Activated naive CD8-positive, alpha-beta T cell treated with anti-CD3 and anti-CD28 coated beads, Interleukin-2, amount 10 ng/mL, durations not matched to agents 7 days and 5 days (primary cell): ENCODE measurements at regions of chr2 and their contacts with region 1.

Region 1: GRCh38 chr2:85595301-85596025 is at the start of gene RNF181:
- DNase-seq: peak; percentile 83
- ATAC-seq: peak; percentile 100
- H3K4me3 Mint-ChIP-seq: peak within 1 kb of the TSS; percentile 95
- H3K27ac Mint-ChIP-seq: peak within 1 kb of the TSS; percentile 93
- H3K4me1 Mint-ChIP-seq: peaks cover 27% of the 10 kb centered on the region
- H3K27me3 Mint-ChIP-seq: no peaks in the 10 kb centered on the region
- total RNA-seq, gene RNF181: 96.4 to 97.4 TPM

Region 2: DNA sequence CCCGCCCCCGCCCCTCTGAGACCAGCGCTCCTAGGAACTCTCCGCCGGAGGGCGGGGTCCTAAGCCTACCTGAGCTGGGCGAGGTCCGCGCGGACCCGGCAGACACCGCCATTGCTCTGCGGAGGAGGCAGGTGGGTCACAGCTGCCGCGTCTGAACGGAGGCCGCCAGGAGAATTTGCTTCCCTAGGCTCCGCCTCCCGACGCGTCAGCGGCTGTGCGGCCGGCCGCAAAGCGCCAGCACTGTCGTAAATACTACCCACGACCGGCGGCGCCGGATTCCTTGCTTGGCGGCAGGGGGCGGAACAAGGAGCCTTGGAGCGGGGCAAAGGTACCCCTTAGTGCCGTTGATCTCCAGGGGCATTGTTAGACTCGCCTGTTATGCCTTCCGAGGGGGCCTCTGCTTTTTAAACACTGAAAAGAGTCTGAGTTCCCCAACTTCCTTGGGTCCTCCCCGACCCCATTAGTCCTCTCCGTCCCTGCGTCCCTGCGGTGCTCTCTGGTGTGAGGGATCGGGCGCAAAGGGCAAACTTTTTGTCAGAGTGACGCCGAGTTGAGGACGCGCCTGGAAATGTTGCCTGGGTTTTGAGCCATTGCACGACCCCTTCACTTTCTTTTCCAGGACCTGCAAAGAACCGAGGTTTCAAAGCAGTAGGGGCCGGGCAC is 34.0 kb before region 1 on chr2 and contains the start of gene GGCX:
- POLR2A ChIA-PET with region 1: interaction called, 22 read pairs
- DNase-seq: peak; percentile 89
- ATAC-seq: peak; percentile 95
- H3K4me3 Mint-ChIP-seq: peak within 1 kb of the TSS; percentile 97
- H3K27ac Mint-ChIP-seq: peak within 1 kb of the TSS; percentile 95
- H3K4me1 Mint-ChIP-seq: peaks cover 24% of the 10 kb centered on the region
- H3K27me3 Mint-ChIP-seq: no peaks in the 10 kb centered on the region
- total RNA-seq, gene GGCX: 24.8 to 26.8 TPM

Region 3: GRCh38 chr2:85577386-85578242 is 17.8 kb before region 1 on chr2 and contains the start of gene VAMP8:
- POLR2A ChIA-PET with region 1: interaction called, 24 read pairs
- DNase-seq: peak; percentile 66
- ATAC-seq: peak; percentile 82
- H3K4me3 Mint-ChIP-seq: peak within 1 kb of the TSS; percentile 92
- H3K27ac Mint-ChIP-seq: peak within 1 kb of the TSS; percentile 90
- H3K4me1 Mint-ChIP-seq: peaks cover 30% of the 10 kb centered on the region
- H3K27me3 Mint-ChIP-seq: peaks cover 1% of the 10 kb centered on the region
- total RNA-seq, gene VAMP8: 128 to 135 TPM

Region 4: GRCh38 chr2:85584857-85585783 is 10.3 kb before region 1 on chr2:
- POLR2A ChIA-PET with region 1: interaction called, 44 read pairs
- DNase-seq: peak; percentile 59
- ATAC-seq: peak; percentile 36
- H3K4me3 Mint-ChIP-seq: peak overlapping the region; percentile 97
- H3K27ac Mint-ChIP-seq: peak overlapping the region; percentile 92
- H3K4me1 Mint-ChIP-seq: peaks cover 55% of the 10 kb centered on the region
- H3K27me3 Mint-ChIP-seq: no peaks in the 10 kb centered on the region

Region 5: GRCh38 chr2:85611705-85612587 is 16.5 kb after region 1 on chr2 and contains the start of gene C2orf68:
- POLR2A ChIA-PET with region 1: interaction called, 37 read pairs
- DNase-seq: peak; percentile 89
- ATAC-seq: peak; percentile 69
- H3K4me3 Mint-ChIP-seq: peak within 1 kb of the TSS; percentile 100
- H3K27ac Mint-ChIP-seq: peak within 1 kb of the TSS; percentile 95
- H3K4me1 Mint-ChIP-seq: peaks cover 10% of the 10 kb centered on the region
- H3K27me3 Mint-ChIP-seq: no peaks in the 10 kb centered on the region
- total RNA-seq, gene C2orf68: 54.7 to 61.2 TPM

Region 6: GRCh38 chr2:85769236-85769984 is 173.9 kb after region 1 on chr2:
- POLR2A ChIA-PET with region 1: no interaction called
- DNase-seq: no peak
- ATAC-seq: no peak
- H3K4me3 Mint-ChIP-seq: no peak overlapping the region
- H3K27ac Mint-ChIP-seq: no peak overlapping the region
- H3K4me1 Mint-ChIP-seq: peaks cover 5% of the 10 kb centered on the region
- H3K27me3 Mint-ChIP-seq: peaks cover 52% of the 10 kb centered on the region